ENCODE measurements at regions of chr9 and their contacts with region 1.

Region 1: GRCh38 chr9:37913480-37914153 is 9.7 kb upstream of the SLC25A51 start:
- DNase-seq: peak; percentile 91
- H3K4me3 ChIP-seq: no peak overlapping the region
- H3K27ac ChIP-seq: no peak overlapping the region
- H3K4me1 ChIP-seq: no peaks in the 10 kb centered on the region
- H3K27me3 ChIP-seq: no peaks in the 10 kb centered on the region
- CTCF ChIP-seq: peak; percentile 98

Region 2: GRCh38 chr9:37187713-37188439 is 725.7 kb before region 1 on chr9:
- CTCF ChIA-PET with region 1: no interaction called
- POLR2A ChIA-PET with region 1: no interaction called
- intact Hi-C with region 1: no loop called
- DNase-seq: no peak
- H3K4me3 ChIP-seq: no peak overlapping the region
- H3K27ac ChIP-seq: no peak overlapping the region
- H3K4me1 ChIP-seq: peaks cover 33% of the 10 kb centered on the region
- H3K27me3 ChIP-seq: no peaks in the 10 kb centered on the region
- CTCF ChIP-seq: no peak

Region 3: DNA sequence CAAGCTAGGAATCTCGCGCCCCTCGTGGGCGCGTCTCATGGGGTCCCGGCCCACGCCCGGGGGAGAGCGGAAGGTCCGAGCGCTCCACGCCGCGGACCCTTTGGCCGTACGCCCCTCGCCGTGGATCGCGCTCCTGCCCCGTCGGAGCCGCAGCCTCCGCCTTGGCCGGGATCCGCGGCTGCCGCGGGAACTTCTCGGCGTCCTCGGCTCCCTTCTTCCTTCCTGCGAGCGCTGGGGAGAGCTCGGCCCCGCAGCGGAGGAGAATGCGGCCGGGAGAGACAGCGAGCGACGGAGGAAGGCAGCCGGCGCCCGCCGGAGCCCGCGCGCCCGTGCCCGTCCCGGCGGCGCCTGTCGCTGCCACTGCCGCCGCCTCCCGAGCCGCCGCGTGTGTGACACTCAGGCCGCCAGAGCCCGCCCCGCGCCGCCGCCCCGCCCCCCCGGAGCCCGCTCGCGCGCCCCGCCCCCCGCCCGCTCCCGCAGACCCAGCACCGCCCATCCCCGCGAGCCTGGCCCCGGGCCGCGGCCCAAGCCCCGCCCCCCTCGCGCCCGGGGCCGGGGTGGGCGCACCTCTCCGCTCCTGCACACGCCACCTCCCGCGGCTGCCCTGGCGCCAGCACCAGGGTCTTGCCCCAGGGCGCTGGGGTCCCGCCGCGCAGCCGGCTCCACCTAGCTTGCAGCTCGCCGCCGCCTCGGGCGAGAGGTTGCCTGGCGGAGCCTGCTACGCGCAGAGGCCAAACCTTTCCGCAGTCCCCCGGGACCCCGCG is 155.4 kb after region 1 on chr9 and contains the start of gene SHB:
- CTCF ChIA-PET with region 1: interaction called, 12 read pairs
- POLR2A ChIA-PET with region 1: no interaction called
- intact Hi-C with region 1: loop called (anchors 2 kb)
- DNase-seq: peak; percentile 87
- H3K4me3 ChIP-seq: peak within 1 kb of the TSS; percentile 89
- H3K27ac ChIP-seq: peak within 1 kb of the TSS; percentile 91
- H3K4me1 ChIP-seq: peaks cover 20% of the 10 kb centered on the region
- H3K27me3 ChIP-seq: no peaks in the 10 kb centered on the region
- CTCF ChIP-seq: peak; percentile 50; the same call in 1 of the 2 replicates
- total RNA-seq, gene SHB: 14.7 and 20.7 TPM in 2 replicates

Region 4: DNA sequence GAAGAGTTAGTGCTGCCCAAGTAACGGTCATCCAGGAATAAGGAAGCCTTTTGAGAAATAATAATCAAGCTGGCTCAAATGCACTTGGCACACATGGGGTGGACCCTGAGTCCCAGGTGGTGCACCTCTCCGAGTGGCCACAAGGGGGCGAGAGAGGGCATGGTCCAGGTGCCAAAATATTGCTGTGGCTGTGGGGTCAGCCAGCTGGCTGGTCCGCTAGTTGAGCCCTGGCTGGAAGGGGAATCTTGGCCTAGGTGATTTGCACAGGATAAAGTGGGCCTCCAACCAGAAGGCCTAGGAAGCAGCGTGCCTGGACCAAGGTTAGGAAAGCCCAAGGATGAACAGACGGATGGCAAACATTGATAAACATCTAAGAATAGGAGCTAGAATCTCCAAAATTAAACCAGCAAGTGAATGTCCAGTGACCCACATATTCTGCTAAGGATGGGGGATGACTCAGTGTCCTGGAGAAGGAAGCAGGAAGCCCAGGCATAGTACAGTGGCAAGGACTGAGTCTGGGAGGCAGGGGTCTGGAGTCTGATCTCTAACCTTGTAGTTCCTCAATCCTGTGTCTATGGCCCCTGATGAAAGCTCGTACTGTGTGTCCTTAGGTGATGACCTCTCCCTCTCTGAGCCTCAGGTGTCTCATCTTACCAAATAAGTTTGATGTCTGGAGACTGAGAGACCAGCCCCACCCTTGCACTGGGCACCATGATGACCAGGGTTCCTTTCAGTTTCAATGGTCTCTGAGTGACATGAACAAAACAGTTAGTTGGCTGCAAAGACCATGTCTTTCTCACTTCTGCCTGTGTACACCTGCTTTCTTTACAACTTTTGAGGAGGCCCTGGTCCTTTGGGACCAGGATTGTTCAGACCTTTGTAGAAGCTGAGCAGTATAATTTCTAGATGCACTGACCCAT is 174.6 kb after region 1 on chr9:
- CTCF ChIA-PET with region 1: interaction called, 12 read pairs
- POLR2A ChIA-PET with region 1: no interaction called
- intact Hi-C with region 1: loop called (anchors 1 kb)
- DNase-seq: peak; percentile 50
- H3K4me3 ChIP-seq: no peak overlapping the region
- H3K27ac ChIP-seq: no peak overlapping the region
- H3K4me1 ChIP-seq: no peaks in the 10 kb centered on the region
- H3K27me3 ChIP-seq: no peaks in the 10 kb centered on the region
- CTCF ChIP-seq: peak; percentile 99

Region 5: GRCh38 chr9:38160613-38161215 is 247.1 kb after region 1 on chr9:
- CTCF ChIA-PET with region 1: interaction called, 8 read pairs
- POLR2A ChIA-PET with region 1: no interaction called
- intact Hi-C with region 1: loop called (anchors 1 kb)
- DNase-seq: peak; percentile 76
- H3K4me3 ChIP-seq: no peak overlapping the region
- H3K27ac ChIP-seq: no peak overlapping the region
- H3K4me1 ChIP-seq: no peaks in the 10 kb centered on the region
- H3K27me3 ChIP-seq: no peaks in the 10 kb centered on the region
- CTCF ChIP-seq: peak; percentile 95

Region 6: DNA sequence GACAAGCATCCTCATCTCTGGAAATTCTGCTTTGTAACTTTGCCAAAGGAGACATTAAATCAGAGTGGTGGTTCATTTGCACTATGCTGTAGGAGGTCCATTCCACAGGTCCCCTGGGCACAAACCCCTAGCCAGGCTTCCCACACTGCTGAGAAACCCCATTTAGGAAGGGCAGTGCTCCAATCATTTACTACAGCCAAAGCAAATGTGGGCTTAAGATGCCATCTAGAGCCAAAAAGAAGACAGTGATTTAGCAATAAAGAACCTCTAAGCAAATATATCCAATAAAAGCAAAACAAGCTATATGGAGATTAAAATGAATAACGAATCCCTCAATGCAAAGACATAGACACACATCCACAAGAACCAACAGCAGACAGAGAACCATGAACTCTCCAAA is 349.9 kb after region 1 on chr9:
- CTCF ChIA-PET with region 1: interaction called, 5 read pairs
- POLR2A ChIA-PET with region 1: no interaction called
- intact Hi-C with region 1: loop called (anchors 2 kb)
- DNase-seq: peak; percentile 46
- H3K4me3 ChIP-seq: no peak overlapping the region
- H3K27ac ChIP-seq: no peak overlapping the region
- H3K4me1 ChIP-seq: no peaks in the 10 kb centered on the region
- H3K27me3 ChIP-seq: peaks cover 8% of the 10 kb centered on the region
- CTCF ChIP-seq: peak; percentile 53

Region 7: DNA sequence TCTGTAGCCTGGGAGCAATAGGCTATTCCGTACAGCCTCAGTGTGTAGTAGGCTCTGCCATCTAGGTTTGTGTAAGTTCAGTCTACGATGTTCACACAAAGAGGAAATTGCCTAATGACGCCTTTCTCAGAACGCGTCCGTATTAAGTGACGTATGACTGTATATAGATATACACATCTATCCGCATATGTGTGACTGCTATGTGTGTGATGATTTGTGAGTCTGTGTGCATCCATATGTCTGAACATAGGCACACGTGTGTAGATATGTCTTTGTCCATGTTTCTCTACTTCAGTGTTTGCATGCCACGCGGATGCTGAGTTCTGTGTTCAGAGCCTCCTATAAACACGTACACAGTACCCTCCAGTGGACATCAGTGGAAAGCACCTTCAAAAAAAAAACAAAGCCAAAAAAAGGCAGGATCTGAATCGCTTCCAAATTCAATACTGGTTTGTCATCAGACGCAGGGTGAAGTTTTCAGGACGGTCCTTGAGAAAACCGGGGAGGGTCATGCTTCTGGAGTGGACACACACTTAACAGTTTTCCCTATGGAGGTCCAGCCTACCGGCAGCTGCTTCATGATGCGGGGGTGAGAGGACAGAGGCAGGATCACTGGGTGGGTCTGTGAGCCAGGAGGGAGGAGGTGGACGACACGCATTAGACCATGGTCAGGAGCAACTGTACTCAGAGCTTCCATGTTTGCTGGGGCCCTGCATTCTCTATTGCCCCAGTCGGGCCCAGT is 449.4 kb after region 1 on chr9:
- CTCF ChIA-PET with region 1: interaction called, 3 read pairs
- POLR2A ChIA-PET with region 1: no interaction called
- intact Hi-C with region 1: loop called (anchors 1 kb)
- DNase-seq: peak; percentile 69
- H3K4me3 ChIP-seq: no peak overlapping the region
- H3K27ac ChIP-seq: no peak overlapping the region
- H3K4me1 ChIP-seq: no peaks in the 10 kb centered on the region
- H3K27me3 ChIP-seq: no peaks in the 10 kb centered on the region
- CTCF ChIP-seq: peak; percentile 72

Region 8: DNA sequence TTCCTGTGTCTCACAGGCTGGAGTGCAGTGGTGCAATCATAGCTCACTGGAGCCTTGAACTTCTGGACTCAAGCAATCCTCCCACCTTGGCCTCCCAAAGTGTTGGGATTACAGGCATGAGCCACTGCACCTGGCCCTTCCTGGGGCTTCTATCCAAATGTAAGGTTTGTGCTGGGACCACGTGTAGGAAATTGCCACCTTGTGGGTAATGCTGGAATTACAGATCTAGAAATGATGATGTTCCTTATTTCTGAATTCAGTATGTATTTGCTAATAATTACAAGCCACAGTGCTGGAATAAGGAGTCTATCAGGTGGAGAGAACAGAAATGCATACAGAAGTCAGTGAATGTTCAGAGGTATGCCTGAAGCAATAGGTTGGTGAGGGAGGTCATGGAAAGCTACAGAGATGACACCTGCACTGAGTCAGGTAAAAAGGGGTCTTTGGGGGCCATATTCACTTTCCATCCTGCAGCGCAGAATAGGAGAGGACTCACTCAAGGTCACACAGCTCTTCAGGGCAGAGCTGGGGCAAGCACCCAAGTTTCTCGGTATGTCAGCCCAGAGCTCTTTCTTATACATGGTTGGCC is 519.4 kb after region 1 on chr9:
- CTCF ChIA-PET with region 1: interaction called, 3 read pairs
- POLR2A ChIA-PET with region 1: no interaction called
- intact Hi-C with region 1: loop called (anchors 10 kb)
- DNase-seq: peak; percentile 57
- H3K4me3 ChIP-seq: no peak overlapping the region
- H3K27ac ChIP-seq: no peak overlapping the region
- H3K4me1 ChIP-seq: no peaks in the 10 kb centered on the region
- H3K27me3 ChIP-seq: peaks cover 1% of the 10 kb centered on the region
- CTCF ChIP-seq: peak; percentile 63